Lower leg skin (tissue), 4 donors: ENCODE measurements at regions of chr22 and their contacts with region 1.

Region 1: GRCh38 chr22:30289134-30289979 is at the start of gene CASTOR1:
- DNase-seq: peak; percentile 99 to 100
- H3K4me3 ChIP-seq: peak within 1 kb of the TSS; percentile 64
- CTCF ChIP-seq: no peak
- POLR2A ChIP-seq: no peak
- total RNA-seq, gene CASTOR1: 16.3 to 38.1 (median 22.6) TPM

Region 2: GRCh38 chr22:28560046-28560742 is 1729.2 kb before region 1 on chr22:
- intact Hi-C with region 1: no loop called
- DNase-seq: no peak
- H3K4me3 ChIP-seq: no peak overlapping the region
- CTCF ChIP-seq: no peak
- POLR2A ChIP-seq: no peak

Region 3: GRCh38 chr22:30104501-30105156 is 184.7 kb before region 1 on chr22:
- intact Hi-C with region 1: loop called (anchors 2 kb)
- DNase-seq: no peak
- H3K4me3 ChIP-seq: no peak overlapping the region
- CTCF ChIP-seq: no peak
- POLR2A ChIP-seq: no peak